ENCODE measurements at regions of chr3 and their contacts with region 1.

Region 1: GRCh38 chr3:171556148-171557145 is 96.2 kb upstream of the TNIK start:
- DNase-seq: peak; percentile 29 to 32
- ATAC-seq: peak; percentile 55 to 94 (median 87)
- H3K4me3 ChIP-seq: no peak overlapping the region
- H3K27ac ChIP-seq: no peak overlapping the region
- H3K4me1 ChIP-seq: peaks cover 0 to 27% (median 4%) of the 10 kb centered on the region in 9 donors
- H3K27me3 ChIP-seq: no peaks in the 10 kb centered on the region
- CTCF ChIP-seq: no peak

Region 2: DNA sequence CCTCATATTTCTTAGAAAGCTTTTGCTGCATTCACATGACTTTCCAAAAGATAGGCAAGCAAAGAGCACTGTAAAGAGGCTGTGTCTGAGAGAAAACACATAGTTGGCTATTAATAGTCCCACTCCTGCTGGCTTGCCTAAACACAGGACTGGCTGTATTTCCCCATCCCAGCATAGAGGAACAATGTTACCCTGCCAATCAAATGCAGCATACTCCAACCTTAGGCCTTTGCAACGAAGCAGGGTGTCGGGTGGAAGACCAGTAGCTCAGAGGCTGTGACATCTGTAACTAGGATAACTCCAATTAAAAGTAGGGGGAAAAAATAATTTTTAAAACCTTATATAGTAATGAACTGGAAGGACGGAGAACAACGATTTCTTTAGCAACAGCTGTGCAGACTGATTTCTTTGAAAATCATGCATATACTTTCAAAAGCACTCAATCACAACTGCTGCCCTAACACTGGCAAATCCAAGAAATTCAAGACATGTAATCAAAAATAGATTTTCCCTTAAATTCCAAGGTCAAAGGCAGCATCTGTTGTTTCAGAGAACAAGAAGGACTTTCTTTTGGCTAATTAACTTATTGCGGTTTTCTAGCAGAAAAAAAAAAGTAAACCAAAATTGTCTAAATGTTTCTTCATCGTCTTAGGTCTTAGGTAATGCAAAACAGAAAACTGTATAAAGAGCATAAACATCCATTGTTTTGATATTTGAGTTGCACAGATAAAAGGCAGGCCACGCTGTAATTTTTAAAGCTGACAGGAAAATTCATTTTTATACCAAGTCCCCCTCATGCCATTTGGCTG is 235.5 kb before region 1 on chr3:
- intact Hi-C with region 1: loop called in 3 of 10 experiments (anchors 5 to 10 kb)
- DNase-seq: peak in 1 of 2 donors; percentile 58
- ATAC-seq: peak; percentile 85 to 97 (median 94)
- H3K4me3 ChIP-seq: peak overlapping the region in 2 of 10 donors; percentile 3
- H3K27ac ChIP-seq: peak overlapping the region in 6 of 10 donors; percentile 38 to 69 (median 58)
- H3K4me1 ChIP-seq: peaks cover 0 to 60% (median 37%) of the 10 kb centered on the region in 9 donors
- H3K27me3 ChIP-seq: no peaks in the 10 kb centered on the region
- CTCF ChIP-seq: no peak

Region 3: DNA sequence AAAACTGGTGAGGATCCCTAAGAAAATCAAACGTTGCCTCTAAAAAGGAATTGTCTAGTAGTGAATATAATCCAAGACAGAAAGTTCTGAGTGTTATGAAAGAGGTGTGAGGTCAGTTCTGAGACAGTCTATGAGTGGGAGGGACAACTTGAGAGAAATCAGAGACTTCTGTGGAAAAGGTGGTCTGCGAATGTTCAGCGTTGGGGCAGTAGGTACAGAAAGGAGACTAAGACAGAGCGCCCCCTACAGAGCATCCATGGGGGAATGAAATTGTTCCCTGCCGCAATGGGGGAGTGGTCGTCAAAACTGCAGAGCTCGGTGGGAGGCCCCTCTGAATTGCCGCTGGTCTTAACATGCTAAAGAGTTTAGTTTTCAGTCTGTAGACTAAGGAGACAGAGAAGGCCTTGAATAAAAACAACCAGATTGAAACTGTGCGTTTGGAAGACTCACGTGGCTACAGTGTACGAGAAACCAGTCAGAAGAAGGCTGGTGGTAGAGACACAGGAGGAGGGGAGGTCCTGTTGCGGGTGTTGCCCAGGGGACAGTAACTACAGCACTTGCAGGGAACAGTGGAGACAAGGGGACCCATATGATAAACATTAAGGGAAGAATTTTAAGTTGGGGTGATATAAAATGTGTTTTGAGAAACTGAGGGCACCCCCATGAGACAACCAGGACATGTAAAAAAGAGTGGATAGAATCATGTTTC is 103.1 kb before region 1 on chr3:
- intact Hi-C with region 1: no loop called
- DNase-seq: no peak
- ATAC-seq: peak in 1 of 8 donors; percentile 31
- H3K4me3 ChIP-seq: no peak overlapping the region
- H3K27ac ChIP-seq: peak overlapping the region in 5 of 10 donors; percentile 20 to 52 (median 40)
- H3K4me1 ChIP-seq: peaks cover 0 to 67% (median 38%) of the 10 kb centered on the region in 9 donors
- H3K27me3 ChIP-seq: peaks cover 0 to 4% (median 0%) of the 10 kb centered on the region in 7 donors
- CTCF ChIP-seq: peak in 6 of 9 donors; percentile 13 to 32 (median 16)

Region 4: DNA sequence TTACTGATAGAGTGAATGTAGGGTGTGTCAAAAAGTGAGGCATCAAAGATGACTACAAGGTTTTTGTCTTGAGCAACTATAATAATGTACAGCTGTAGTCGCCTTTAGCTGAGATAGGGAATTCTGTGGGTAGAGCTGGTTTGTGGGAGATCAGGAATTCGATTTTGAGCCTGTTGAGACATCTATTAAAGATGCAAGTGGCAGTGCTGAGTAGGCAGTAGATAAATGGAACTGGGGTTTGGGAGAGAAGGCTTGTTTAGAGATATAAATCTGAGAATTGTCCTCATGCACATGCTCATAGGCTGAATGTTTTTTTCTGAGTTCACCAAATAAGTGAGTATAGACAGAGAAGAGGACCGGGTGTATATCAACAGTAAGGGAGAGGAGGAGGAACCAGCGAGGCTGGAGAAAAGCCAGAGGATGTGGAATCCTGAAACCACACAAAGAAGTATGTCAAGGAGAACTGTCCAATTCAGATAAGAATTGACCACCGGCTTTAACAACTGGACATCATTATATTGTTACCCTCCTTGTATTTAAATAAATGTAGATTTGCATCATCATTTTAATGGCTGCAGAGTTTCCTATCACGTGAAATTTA is 49.8 kb after region 1 on chr3:
- intact Hi-C with region 1: no loop called
- DNase-seq: no peak
- ATAC-seq: no peak
- H3K4me3 ChIP-seq: no peak overlapping the region
- H3K27ac ChIP-seq: no peak overlapping the region
- H3K4me1 ChIP-seq: no peaks in the 10 kb centered on the region
- H3K27me3 ChIP-seq: no peaks in the 10 kb centered on the region
- CTCF ChIP-seq: no peak

Measured in heart right ventricle (tissue), 16 donors.